GM12878 (cell line): ENCODE measurements at regions of chr11 and their contacts with region 1.

Region 1: DNA sequence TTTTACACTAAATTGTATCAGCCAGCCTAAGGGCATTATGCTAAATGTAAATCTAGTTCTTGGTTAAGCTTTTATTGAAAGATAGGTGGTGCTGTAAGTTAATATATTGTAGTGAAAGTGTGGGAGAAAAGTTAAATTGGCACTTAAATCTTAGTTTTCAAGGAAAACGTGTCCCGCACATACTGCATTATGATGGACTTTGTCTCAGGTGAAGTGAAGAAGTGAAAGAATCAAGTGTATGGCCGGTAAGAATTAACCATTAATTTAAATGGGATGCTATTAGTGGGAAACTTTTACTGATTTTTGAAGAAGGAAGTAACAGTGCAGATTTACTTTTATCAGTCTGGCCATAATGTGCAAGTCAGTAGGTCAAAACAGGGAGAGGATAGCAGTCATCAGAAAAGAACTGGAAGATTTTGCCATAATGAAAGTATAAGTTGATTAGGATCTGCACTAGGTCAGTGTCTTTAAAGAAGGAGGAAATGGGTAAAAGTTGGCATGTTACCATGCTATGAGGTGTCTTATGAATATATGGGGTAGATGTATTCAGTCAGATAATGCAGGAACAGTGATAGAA is 81.6 kb downstream of the PDHX start:
- DNase-seq: no peak
- ATAC-seq: peak; percentile 74
- H3K4me3 ChIP-seq: no peak overlapping the region
- H3K27ac ChIP-seq: no peak overlapping the region
- H3K4me1 ChIP-seq: peaks cover 8% of the 10 kb centered on the region; the same call in 1 of the 2 replicates
- H3K27me3 ChIP-seq: no peaks in the 10 kb centered on the region
- CTCF ChIP-seq: peak; percentile 24 to 62 (median 41); a peak in 5 of 6 replicates
- EP300 ChIP-seq: no peak
- POLR2A ChIP-seq: no peak
- RAD21 ChIP-seq: peak; percentile 62

Region 2: DNA sequence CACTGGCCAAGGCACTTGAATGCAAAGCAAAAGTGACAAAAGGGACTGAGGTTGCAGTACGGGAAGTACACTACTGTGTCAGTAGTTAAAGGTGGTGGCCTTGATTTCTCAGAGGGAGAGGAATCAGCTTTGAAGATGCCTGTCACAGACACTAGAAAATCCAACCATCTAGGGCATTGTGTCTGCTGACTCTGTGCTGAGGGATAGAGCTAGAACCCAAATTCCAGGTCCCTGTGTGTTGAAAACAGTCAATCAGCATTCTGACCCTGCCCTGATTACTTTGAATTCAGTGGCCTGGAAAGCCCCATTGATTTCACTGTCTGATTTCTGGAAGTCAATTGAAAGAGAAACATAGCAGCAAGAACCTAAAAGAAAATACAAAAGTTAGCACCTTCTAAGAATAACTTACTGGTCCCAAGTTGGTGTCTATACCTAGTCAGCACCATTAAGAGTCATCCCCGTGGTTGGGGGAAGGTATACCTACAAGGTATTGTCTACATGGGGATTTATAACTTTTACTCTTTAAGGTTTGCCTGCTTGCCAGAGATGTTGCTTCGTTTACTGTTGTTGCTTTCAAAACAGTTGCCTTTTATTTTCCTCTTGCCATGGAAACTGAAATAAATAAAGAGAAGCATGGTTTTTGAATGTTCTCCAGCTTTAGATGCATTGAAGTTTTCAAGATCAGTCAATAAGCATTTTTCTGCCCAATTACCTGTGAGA is 15.6 kb after region 1 on chr11:
- CTCF ChIA-PET with region 1: interaction called, 6 read pairs
- POLR2A ChIA-PET with region 1: interaction called, 6 read pairs
- RAD21 ChIA-PET with region 1: interaction called, 10 read pairs
- SMC1A ChIA-PET with region 1: interaction called, 18 read pairs
- in situ Hi-C with region 1: no loop called
- intact Hi-C with region 1: no loop called
- DNase-seq: no peak
- ATAC-seq: peak; percentile 73
- H3K4me3 ChIP-seq: peak overlapping the region; percentile 11; the same call in 1 of the 2 replicates
- H3K27ac ChIP-seq: peak overlapping the region; percentile 73
- H3K4me1 ChIP-seq: peaks cover 22% of the 10 kb centered on the region
- H3K27me3 ChIP-seq: no peaks in the 10 kb centered on the region
- CTCF ChIP-seq: no peak
- EP300 ChIP-seq: peak; percentile 58 to 63; a peak in 3 of 4 replicates
- POLR2A ChIP-seq: no peak
- RAD21 ChIP-seq: 0 out of 2 replicates have a peak, but pooled peaks have one; percentile 10

Region 3: DNA sequence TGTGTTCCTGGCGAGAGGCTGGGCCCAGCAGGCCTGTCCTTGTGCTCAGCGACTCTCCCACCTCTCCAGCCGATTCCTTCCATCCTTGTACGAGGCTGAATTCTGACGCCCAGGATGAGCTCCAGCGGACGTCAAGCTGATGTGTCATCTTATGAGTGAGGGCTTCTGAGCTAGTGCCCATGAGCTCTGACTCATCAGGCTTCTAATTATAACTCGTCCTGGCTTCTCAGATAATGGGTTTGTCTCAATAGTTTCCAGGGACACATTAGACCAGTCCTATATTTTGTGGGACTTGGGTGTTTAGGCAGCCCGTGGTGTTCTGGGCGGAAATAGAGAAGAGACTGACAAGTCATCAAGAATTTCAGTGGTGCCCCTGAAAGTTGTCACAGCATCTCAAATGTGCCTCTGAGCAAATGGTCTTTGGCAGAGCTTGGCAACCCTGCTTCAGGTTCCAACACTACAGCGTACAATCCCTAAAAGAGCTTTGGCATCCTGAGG is 32.7 kb after region 1 on chr11:
- CTCF ChIA-PET with region 1: interaction called, 4 read pairs
- POLR2A ChIA-PET with region 1: no interaction called
- RAD21 ChIA-PET with region 1: no interaction called
- SMC1A ChIA-PET with region 1: interaction called, 10 read pairs
- in situ Hi-C with region 1: no loop called
- intact Hi-C with region 1: no loop called
- DNase-seq: no peak
- ATAC-seq: peak; percentile 62
- H3K4me3 ChIP-seq: no peak overlapping the region
- H3K27ac ChIP-seq: no peak overlapping the region
- H3K4me1 ChIP-seq: peaks cover 25% of the 10 kb centered on the region
- H3K27me3 ChIP-seq: no peaks in the 10 kb centered on the region
- CTCF ChIP-seq: no peak
- EP300 ChIP-seq: no peak
- POLR2A ChIP-seq: no peak
- RAD21 ChIP-seq: no peak

Region 4: GRCh38 chr11:35138943-35139721 is 141.1 kb after region 1 on chr11 and contains the start of gene CD44:
- CTCF ChIA-PET with region 1: interaction called, 16 read pairs
- POLR2A ChIA-PET with region 1: no interaction called
- RAD21 ChIA-PET with region 1: interaction called, 5 read pairs
- SMC1A ChIA-PET with region 1: interaction called, 20 read pairs
- in situ Hi-C with region 1: no loop called
- intact Hi-C with region 1: no loop called
- DNase-seq: no peak
- ATAC-seq: peak; percentile 54
- H3K4me3 ChIP-seq: peak within 1 kb of the TSS; percentile 88
- H3K27ac ChIP-seq: peak within 1 kb of the TSS; percentile 68
- H3K4me1 ChIP-seq: peaks cover 34% of the 10 kb centered on the region
- H3K27me3 ChIP-seq: no peaks in the 10 kb centered on the region
- CTCF ChIP-seq: no peak
- EP300 ChIP-seq: no peak
- POLR2A ChIP-seq: peak; percentile 99
- RAD21 ChIP-seq: no peak
- polyA plus RNA-seq, gene CD44: 57.1 to 65.3 TPM

Region 5: DNA sequence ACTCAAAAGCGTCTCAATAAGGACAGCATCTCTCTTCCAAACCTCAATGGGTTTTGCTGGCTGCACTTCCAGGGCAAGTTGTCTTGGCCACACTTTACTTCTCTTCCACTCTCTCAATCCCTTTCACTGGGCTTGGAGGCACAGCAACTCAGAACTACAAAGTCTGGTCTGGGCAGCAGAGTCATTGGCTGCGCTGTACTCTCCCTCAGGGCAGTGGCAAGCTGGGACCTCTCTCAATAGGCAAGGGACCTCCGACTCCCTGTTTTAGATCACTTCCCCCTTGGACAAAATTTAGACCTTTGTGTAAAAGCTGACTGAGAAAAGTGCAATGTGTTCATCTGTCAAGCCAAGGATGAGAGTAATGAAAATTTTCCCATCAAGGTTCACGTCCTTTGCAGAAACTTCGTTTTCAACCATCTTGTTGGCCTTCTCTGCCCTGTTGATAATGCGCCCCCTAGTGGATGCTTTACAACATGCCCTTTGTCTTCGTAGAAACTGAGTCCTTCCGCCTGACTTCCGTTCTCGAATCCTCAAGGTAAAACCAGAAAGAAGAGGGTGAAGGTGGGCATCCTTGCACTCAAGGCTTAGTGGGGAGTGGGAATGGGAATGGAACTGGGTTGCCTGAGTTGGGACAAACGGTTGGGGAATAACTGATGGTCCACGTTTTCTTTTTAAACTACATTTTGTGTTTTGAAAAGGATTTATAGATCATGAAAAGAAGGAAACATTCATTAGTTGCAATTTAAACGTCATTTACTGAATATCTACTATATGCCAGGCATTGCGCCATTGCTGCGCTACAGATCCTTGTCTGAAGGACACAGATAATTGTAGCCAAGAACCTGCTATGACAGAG is 240.0 kb after region 1 on chr11:
- CTCF ChIA-PET with region 1: interaction called, 93 read pairs
- POLR2A ChIA-PET with region 1: interaction called, 3 read pairs
- RAD21 ChIA-PET with region 1: interaction called, 79 read pairs
- SMC1A ChIA-PET with region 1: interaction called, 64 read pairs
- in situ Hi-C with region 1: loop called (anchors 5 kb)
- intact Hi-C with region 1: loop called (anchors 1 kb)
- DNase-seq: peak; percentile 35
- ATAC-seq: peak; percentile 70
- H3K4me3 ChIP-seq: no peak overlapping the region
- H3K27ac ChIP-seq: no peak overlapping the region
- H3K4me1 ChIP-seq: peaks cover 19% of the 10 kb centered on the region
- H3K27me3 ChIP-seq: no peaks in the 10 kb centered on the region
- CTCF ChIP-seq: peak; percentile 73 to 82 (median 82)
- EP300 ChIP-seq: no peak
- POLR2A ChIP-seq: no peak
- RAD21 ChIP-seq: peak; percentile 84

Region 6: DNA sequence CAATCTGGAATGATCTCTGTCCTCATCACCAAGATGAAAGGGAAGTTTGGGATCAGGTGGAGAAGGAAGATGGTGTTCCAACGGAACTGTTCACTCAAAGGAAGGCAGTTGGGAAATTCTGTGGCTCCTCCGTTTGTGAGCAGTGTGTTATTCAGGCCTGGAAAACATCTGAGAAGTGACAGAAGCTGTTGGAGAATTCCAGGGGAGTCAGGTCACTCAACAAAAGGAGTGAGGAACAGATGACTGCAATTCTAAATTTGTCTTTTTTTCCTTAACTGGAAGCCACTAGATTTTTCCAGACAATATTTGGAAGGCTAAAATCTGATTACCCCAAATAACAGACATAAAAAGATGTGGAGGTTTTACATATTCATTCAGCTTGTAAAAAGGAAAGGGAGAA is 248.7 kb after region 1 on chr11:
- CTCF ChIA-PET with region 1: interaction called, 93 read pairs
- POLR2A ChIA-PET with region 1: no interaction called
- RAD21 ChIA-PET with region 1: interaction called, 10 read pairs
- SMC1A ChIA-PET with region 1: interaction called, 3 read pairs
- in situ Hi-C with region 1: no loop called
- intact Hi-C with region 1: no loop called
- DNase-seq: no peak
- ATAC-seq: no peak
- H3K4me3 ChIP-seq: no peak overlapping the region
- H3K27ac ChIP-seq: no peak overlapping the region
- H3K4me1 ChIP-seq: no peaks in the 10 kb centered on the region
- H3K27me3 ChIP-seq: no peaks in the 10 kb centered on the region
- CTCF ChIP-seq: no peak
- EP300 ChIP-seq: no peak
- POLR2A ChIP-seq: no peak
- RAD21 ChIP-seq: no peak